Dendritic cell treated with granulocyte-macrophage colony-stimulating factor and Interleukin-4, amounts not matched to agents 40 ng/mL and 50 ng/mL, for 4 days (primary cell): ENCODE measurements at regions of chr11 and their contacts with region 1.

Region 1: GRCh38 chr11:130181295-130182272 is 22.0 kb downstream of the ST14 start:
- H3K4me3 Mint-ChIP-seq: no peak overlapping the region
- H3K27ac Mint-ChIP-seq: peak overlapping the region; percentile 91
- H3K4me1 Mint-ChIP-seq: peaks cover 46% of the 10 kb centered on the region
- H3K27me3 Mint-ChIP-seq: no peaks in the 10 kb centered on the region

Region 2: DNA sequence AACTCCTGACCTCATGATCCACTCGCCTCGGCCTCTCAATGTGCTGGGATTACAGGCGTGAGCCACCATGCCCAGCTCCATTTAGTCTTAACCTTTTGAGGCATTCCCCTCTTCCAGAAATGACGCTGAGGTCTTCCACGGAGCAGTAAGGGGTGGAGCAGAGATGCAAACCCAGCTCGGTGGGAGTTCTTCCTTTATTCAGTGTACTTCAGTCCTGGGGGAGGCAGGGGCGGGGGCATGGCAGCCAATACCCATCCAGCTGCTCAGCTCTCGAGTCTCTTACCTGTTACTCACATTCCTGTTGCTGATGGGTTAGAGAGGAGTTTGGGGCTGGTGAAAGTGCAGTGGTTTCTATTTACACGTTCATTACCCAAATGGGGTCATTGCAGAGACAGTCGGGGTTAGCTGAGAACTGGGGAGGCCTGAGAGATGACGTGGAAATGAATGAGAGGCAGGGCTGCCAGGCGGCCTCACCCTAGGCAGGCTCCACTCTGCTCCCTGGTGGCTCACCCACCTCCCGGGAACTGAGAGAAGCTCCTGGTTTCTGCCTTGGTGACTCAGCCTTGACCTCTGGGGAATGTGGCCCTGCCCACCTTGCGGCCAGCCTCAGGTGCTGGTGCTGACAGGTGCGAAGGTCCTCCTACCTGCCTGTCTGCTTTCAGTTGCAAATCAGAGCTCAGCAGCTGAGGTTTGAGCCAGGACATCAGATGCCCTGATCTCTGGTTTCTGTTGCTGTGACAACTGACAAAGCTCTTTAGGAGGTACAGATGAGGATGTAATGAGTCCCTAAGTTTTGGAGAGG is 35.4 kb before region 1 on chr11:
- intact Hi-C with region 1: loop called (anchors 5 kb)
- H3K4me3 Mint-ChIP-seq: peak overlapping the region; percentile 4
- H3K27ac Mint-ChIP-seq: peak overlapping the region; percentile 71
- H3K4me1 Mint-ChIP-seq: peaks cover 64% of the 10 kb centered on the region
- H3K27me3 Mint-ChIP-seq: no peaks in the 10 kb centered on the region

Region 3: DNA sequence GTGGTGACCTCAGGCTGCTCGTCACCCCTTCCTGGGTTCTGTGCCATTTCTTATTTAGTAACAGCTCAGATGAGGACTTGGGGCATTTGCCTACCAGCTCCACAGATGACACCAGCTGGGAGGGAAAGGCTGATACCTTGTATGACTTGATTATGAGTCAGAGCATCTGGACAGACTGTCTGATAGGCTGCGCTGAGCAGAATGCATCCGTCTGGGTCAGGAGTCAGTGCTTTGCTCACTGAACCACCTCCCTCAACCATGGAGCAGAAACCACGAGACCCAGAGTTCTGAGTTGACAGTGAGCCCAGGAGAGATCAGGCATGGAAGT is 15.2 kb before region 1 on chr11:
- intact Hi-C with region 1: loop called (anchors 2 kb)
- H3K4me3 Mint-ChIP-seq: no peak overlapping the region
- H3K27ac Mint-ChIP-seq: no peak overlapping the region
- H3K4me1 Mint-ChIP-seq: peaks cover 62% of the 10 kb centered on the region
- H3K27me3 Mint-ChIP-seq: peaks cover 12% of the 10 kb centered on the region

Region 4: DNA sequence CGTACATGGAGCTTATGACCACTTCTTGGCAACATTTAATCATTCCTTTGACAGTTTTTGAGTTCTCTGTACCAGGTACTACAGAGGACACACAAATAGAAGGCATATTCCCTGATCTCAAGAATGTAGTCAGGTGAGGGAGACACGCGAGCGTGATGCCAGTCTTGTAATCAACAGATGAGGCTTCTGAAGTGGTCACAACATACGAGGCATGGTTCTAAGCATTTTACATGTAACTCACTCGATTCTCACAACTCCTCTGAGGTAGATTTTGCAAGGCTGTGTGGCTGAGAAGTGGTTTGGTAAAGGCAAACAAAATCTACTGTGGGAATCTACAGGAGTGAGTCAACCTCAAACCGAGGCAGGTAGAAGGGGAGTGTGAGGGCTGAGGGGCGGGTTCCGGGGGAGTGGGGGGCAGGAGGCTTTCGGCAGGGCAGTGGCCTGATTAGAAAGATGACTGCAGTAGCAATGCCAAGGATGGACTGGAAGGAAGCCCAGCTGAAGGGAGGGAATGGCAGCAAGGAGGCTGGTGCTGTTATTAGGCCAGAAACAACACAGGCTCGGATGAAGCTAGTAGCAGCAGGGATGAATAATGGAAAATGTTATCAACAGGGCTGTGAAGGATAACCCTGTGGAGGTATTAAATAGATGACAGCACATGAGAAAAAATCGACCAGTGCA is 41.8 kb after region 1 on chr11:
- intact Hi-C with region 1: no loop called
- H3K4me3 Mint-ChIP-seq: no peak overlapping the region
- H3K27ac Mint-ChIP-seq: no peak overlapping the region
- H3K4me1 Mint-ChIP-seq: no peaks in the 10 kb centered on the region
- H3K27me3 Mint-ChIP-seq: no peaks in the 10 kb centered on the region

Region 5: GRCh38 chr11:130601141-130601540 is 419.6 kb after region 1 on chr11:
- intact Hi-C with region 1: no loop called
- H3K4me3 Mint-ChIP-seq: no peak overlapping the region
- H3K27ac Mint-ChIP-seq: peak overlapping the region; percentile 7
- H3K4me1 Mint-ChIP-seq: peaks cover 11% of the 10 kb centered on the region
- H3K27me3 Mint-ChIP-seq: peaks cover 3% of the 10 kb centered on the region